T-cell (primary cell): ENCODE measurements at regions of chr6 and their contacts with region 1.

Region 1: GRCh38 chr6:104771258-104771832 is 88.4 kb downstream of the HACE1 start:
- DNase-seq: peak in 1 of 35 experiments; percentile 39
- ATAC-seq: peak in 2 of 4 experiments; percentile 51 to 65
- H3K4me3 ChIP-seq: no peak overlapping the region
- H3K4me3 Mint-ChIP-seq: no peak overlapping the region
- H3K27ac ChIP-seq: no peak overlapping the region
- H3K27ac Mint-ChIP-seq: no peak overlapping the region
- H3K4me1 ChIP-seq: peaks cover 0 to 4% of the 10 kb centered on the region in 2 experiments
- H3K4me1 Mint-ChIP-seq: peaks cover 6 to 10% (median 10%) of the 10 kb centered on the region in 3 donors
- H3K27me3 ChIP-seq: no peaks in the 10 kb centered on the region
- H3K27me3 Mint-ChIP-seq: no peaks in the 10 kb centered on the region

Region 2: DNA sequence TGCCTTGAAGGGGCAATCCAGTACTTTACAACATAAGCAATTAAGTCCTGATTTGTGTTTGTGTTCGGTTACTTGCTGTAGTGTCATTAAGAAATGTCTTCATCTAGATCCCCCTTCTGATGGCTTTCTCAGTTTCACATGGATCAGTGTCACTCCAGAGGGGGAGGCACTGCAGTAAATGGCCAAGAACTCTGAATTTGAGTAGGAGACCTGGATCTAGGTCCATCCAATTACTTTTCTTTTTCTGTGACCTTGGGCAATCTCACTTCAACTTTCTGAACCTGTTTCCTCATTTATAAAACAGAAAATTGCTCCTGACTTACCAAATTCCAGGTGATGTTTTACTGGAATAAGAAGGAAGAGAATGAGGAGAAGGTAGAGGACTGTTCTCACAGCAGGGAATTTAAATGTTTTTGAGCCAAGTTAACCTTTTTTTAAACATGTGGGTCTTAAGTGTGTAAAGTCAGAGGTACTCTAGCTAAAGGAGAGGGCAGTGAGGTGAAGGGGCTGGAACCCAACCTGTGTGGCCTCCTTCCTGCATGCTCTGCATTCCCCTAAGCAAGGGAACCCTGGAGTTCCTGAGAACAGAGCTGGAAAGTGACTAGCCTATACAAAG is 197.1 kb before region 1 on chr6:
- CTCF ChIA-PET with region 1: no interaction called
- POLR2A ChIA-PET with region 1: interaction called in 1 of 2 experiments, 10 read pairs
- DNase-seq: no peak
- ATAC-seq: no peak
- H3K4me3 ChIP-seq: no peak overlapping the region
- H3K4me3 Mint-ChIP-seq: no peak overlapping the region
- H3K27ac ChIP-seq: no peak overlapping the region
- H3K27ac Mint-ChIP-seq: no peak overlapping the region
- H3K4me1 ChIP-seq: no peaks in the 10 kb centered on the region
- H3K4me1 Mint-ChIP-seq: no peaks in the 10 kb centered on the region
- H3K27me3 ChIP-seq: peaks cover 0 to 3% of the 10 kb centered on the region in 2 experiments
- H3K27me3 Mint-ChIP-seq: no peaks in the 10 kb centered on the region

Region 3: DNA sequence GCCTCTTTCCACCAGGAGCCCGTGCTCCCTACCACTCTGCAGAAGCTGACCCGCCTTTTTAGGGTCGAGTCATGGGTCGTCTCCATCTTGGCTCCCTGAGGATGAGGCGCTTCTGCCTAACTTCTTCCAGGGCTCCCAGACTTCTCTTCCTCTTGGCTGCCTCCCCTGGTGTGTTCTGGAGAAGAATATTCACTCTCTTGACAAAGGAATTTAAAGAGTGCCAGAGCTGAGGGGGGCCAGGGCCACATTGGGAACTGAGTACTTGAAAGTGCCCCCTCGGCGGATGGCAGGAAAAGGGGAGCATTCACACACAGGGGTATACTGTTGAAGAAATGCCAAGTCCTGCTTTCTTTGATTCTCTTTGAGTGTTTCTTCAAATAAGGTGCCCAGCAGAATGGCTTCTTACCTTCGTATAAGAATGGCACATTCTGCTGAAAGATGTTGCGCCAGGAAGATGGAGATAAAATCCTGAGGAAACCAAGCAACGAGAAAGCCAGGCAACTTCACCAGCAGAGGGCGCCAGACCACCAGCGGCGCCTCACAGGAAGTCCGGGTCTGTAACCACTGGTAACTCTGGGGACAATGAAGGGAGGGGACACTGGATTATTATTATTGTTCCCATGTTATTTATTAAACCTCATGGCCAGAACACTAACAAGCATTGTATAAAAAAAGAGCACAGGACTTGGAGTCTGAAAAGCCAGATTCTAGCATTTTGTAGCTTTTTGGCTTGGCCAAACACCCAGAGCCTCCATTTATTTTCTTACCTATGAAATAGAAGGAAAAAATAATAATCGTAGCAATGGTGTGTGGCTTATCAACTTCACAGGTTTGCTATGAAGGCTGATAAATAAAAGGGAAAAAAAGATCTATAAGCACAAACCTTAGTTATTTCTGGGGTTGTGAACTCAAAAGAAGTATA is 88.4 kb before region 1 on chr6:
- CTCF ChIA-PET with region 1: interaction called, 11 to 20 read pairs
- POLR2A ChIA-PET with region 1: no interaction called
- DNase-seq: peak; percentile 12 to 82 (median 54)
- ATAC-seq: peak in 2 of 4 experiments; percentile 54 to 56
- H3K4me3 ChIP-seq: no peak overlapping the region
- H3K4me3 Mint-ChIP-seq: peak overlapping the region in 2 of 3 donors; percentile 8 to 28
- H3K27ac ChIP-seq: no peak overlapping the region
- H3K27ac Mint-ChIP-seq: no peak overlapping the region
- H3K4me1 ChIP-seq: peaks cover 9 to 15% of the 10 kb centered on the region in 2 experiments
- H3K4me1 Mint-ChIP-seq: peaks cover 17 to 22% (median 17%) of the 10 kb centered on the region in 3 donors
- H3K27me3 ChIP-seq: no peaks in the 10 kb centered on the region
- H3K27me3 Mint-ChIP-seq: no peaks in the 10 kb centered on the region

Region 4: GRCh38 chr6:104809116-104809515 is 37.8 kb after region 1 on chr6:
- CTCF ChIA-PET with region 1: no interaction called
- POLR2A ChIA-PET with region 1: no interaction called
- DNase-seq: no peak
- ATAC-seq: no peak
- H3K4me3 ChIP-seq: no peak overlapping the region
- H3K4me3 Mint-ChIP-seq: no peak overlapping the region
- H3K27ac ChIP-seq: no peak overlapping the region
- H3K27ac Mint-ChIP-seq: no peak overlapping the region
- H3K4me1 ChIP-seq: no peaks in the 10 kb centered on the region
- H3K4me1 Mint-ChIP-seq: peaks cover 0 to 15% (median 0%) of the 10 kb centered on the region in 3 donors
- H3K27me3 ChIP-seq: no peaks in the 10 kb centered on the region
- H3K27me3 Mint-ChIP-seq: no peaks in the 10 kb centered on the region

Region 5: GRCh38 chr6:105151644-105152043 is 380.3 kb after region 1 on chr6:
- CTCF ChIA-PET with region 1: no interaction called
- POLR2A ChIA-PET with region 1: no interaction called
- DNase-seq: no peak
- ATAC-seq: no peak
- H3K4me3 ChIP-seq: no peak overlapping the region
- H3K4me3 Mint-ChIP-seq: no peak overlapping the region
- H3K27ac ChIP-seq: no peak overlapping the region
- H3K27ac Mint-ChIP-seq: no peak overlapping the region
- H3K4me1 ChIP-seq: no peaks in the 10 kb centered on the region
- H3K4me1 Mint-ChIP-seq: no peaks in the 10 kb centered on the region
- H3K27me3 ChIP-seq: peaks cover 0 to 7% of the 10 kb centered on the region in 2 experiments
- H3K27me3 Mint-ChIP-seq: peaks cover 12 to 14% of the 10 kb centered on the region in 2 donors